Heart left ventricle (tissue), 16 donors: ENCODE measurements at regions of chr16 and their contacts with region 1.

Region 1: DNA sequence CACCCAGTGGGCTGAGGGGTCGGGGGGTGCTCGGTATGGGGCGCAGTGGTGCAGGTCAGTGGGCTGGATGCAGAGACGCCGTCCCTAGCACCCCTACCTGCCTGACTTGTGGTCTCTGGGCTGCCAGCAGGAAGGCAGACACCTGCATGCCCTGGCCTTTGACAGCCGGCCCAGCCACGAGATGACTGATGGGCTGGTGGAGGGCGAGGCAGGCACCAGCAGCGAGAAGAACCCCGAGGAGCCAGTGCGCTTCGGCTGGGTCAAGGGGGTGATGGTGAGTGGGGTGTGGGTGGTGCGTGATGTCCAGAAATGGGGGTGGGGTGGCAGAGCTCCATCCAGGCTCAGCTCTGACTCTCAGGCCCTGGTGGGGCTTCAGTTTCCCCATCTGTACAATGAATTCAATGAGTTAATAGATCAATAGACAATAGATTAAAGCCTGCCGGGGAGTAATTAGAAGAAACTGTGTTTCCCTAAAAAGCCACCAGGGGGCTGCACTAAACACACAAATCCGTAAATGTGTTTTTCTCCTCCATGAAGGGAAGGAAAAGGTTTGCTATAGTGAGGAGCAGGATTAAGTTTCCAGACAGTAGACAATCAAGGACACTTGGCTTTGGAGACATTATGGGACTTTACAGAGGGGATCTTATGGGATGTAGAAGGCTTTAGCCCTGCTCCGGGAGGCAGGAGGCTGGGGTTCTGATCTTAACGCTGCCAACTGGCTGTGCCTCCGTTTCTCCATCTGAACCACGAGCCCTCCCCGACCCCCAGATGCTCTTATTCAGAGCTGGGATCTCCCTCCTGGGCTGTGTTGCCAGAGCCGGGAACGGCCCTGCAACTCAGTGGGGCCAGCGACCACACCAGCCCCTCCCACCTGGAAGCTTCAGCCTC is 2.2 kb downstream of the SLC12A3 start:
- DNase-seq: no peak
- ATAC-seq: peak in 2 of 4 donors; percentile 9 to 19
- H3K4me3 ChIP-seq: no peak overlapping the region
- H3K27ac ChIP-seq: no peak overlapping the region
- H3K4me1 ChIP-seq: peaks cover 0 to 23% (median 5%) of the 10 kb centered on the region in 12 donors
- H3K27me3 ChIP-seq: no peaks in the 10 kb centered on the region
- CTCF ChIP-seq: peak; percentile 72 to 87 (median 80)
- POLR2A ChIP-seq: no peak

Region 2: GRCh38 chr16:56911771-56912571 is 44.8 kb after region 1 on chr16:
- intact Hi-C with region 1: loop called in 2 of 10 experiments (anchors 5 kb)
- DNase-seq: peak in 4 of 5 donors; percentile 46 to 70 (median 56)
- ATAC-seq: peak; percentile 53 to 84 (median 70)
- H3K4me3 ChIP-seq: no peak overlapping the region
- H3K27ac ChIP-seq: peak overlapping the region in 11 of 12 donors; percentile 25 to 85 (median 55)
- H3K4me1 ChIP-seq: peaks cover 0 to 67% (median 32%) of the 10 kb centered on the region in 12 donors
- H3K27me3 ChIP-seq: no peaks in the 10 kb centered on the region
- CTCF ChIP-seq: no peak
- POLR2A ChIP-seq: no peak

Region 3: DNA sequence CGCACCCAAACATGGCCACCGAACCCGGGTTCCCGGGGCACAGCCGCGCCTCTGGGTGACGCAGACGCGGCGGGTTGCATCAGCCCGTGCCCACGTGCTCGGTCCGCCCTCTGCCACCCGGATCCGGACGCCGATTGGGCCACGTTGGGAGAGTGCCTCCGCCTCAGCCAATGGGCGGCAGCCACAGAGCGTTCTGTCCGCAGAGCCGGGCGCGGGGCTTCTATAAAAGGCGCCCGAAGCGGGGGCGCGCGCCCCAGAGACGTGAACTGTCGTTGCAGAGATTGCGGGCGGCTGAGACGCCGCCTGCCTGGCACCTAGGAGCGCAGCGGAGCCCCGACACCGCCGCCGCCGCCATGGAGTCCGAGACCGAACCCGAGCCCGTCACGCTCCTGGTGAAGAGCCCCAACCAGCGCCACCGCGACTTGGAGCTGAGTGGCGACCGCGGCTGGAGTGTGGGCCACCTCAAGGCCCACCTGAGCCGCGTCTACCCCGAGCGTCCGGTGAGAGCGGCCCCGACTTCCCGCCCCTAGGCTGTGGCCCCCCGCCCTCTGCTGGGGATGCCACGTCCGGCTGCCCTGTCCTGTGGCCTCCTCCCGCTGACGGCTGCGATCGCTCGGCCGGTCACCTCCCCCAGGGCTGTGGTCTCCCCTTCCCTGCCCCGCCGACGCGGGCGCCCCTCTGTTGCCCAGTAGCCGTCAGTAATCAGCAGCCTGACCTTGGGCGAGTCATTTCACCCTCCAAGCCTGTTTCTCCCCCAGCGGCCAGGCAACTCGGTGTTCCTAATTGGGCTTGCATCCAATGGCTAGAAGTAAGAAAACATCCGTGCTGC is 64.9 kb after region 1 on chr16 and contains the start of gene HERPUD1:
- intact Hi-C with region 1: loop called in 8 of 10 experiments (anchors 5 to 10 kb)
- DNase-seq: peak; percentile 99 to 100 (median 99)
- ATAC-seq: peak; percentile 95 to 97 (median 96)
- H3K4me3 ChIP-seq: peak within 1 kb of the TSS; percentile 64 to 100 (median 94)
- H3K27ac ChIP-seq: peak within 1 kb of the TSS; percentile 96 to 100 (median 99)
- H3K4me1 ChIP-seq: peaks cover 0 to 49% (median 39%) of the 10 kb centered on the region in 12 donors
- H3K27me3 ChIP-seq: no peaks in the 10 kb centered on the region
- CTCF ChIP-seq: peak in 6 of 12 donors; percentile 4 to 24 (median 10)
- POLR2A ChIP-seq: peak; percentile 84 to 94
- total RNA-seq, gene HERPUD1: 86.9 to 197 (median 117) TPM

Region 4: DNA sequence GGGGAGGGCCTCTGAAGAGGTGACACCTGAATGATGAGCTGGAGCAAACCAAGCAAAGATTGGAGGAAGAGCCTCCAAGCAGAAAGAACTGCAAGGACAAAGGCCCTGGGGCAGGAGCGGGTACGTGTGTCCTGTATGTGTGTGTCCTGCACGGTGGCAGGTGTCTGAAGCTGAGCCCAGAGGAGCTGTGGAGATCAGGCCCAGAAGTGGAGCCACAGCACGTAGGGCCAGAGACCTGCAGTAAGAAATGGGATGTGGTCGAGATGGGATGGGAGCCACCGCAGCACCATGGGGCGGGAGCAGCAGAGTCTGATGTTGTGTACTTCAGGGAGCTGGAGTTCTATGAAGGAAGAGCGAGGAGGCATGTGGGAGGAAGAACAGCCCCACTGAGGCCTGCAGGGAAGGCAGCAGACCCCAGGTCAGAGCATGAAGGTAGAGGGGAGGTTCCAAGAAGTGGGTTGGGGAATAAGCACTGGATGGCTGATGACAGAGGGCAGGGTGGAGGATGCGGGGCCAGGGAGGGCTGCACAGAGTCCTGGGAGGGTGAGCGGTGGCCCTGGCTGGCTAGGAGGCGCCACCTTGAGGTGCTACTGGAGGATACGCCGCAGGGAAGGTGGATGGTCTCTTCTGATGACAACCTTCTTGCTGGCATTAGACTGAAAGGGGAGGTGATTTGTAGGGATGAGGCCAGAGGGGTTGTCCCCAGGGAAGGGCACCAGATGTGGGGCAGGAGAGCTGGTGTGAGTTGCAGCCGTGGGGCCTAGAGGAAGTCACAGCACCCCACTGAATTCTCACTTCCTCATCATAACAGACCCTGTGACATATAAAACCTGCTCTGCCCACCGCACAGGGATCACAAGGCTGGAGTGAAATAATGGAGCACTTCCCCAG is 83.9 kb after region 1 on chr16:
- intact Hi-C with region 1: loop called (anchors 1 to 5 kb)
- DNase-seq: peak in 3 of 5 donors; percentile 38 to 74 (median 46)
- ATAC-seq: peak; percentile 72 to 79 (median 78)
- H3K4me3 ChIP-seq: no peak overlapping the region
- H3K27ac ChIP-seq: no peak overlapping the region
- H3K4me1 ChIP-seq: peaks cover 0 to 9% (median 0%) of the 10 kb centered on the region in 12 donors
- H3K27me3 ChIP-seq: no peaks in the 10 kb centered on the region
- CTCF ChIP-seq: peak; percentile 41 to 67 (median 48)
- POLR2A ChIP-seq: no peak

Region 5: GRCh38 chr16:57045694-57046381 is 178.7 kb after region 1 on chr16:
- intact Hi-C with region 1: loop called (anchors 1 to 10 kb)
- DNase-seq: peak; percentile 63 to 84 (median 67)
- ATAC-seq: peak; percentile 50 to 86 (median 78)
- H3K4me3 ChIP-seq: peak overlapping the region in 4 of 12 donors; percentile 9 to 29 (median 24)
- H3K27ac ChIP-seq: no peak overlapping the region
- H3K4me1 ChIP-seq: peaks cover 0 to 23% (median 6%) of the 10 kb centered on the region in 12 donors
- H3K27me3 ChIP-seq: no peaks in the 10 kb centered on the region
- CTCF ChIP-seq: peak; percentile 34 to 79 (median 62)
- POLR2A ChIP-seq: no peak

Region 6: DNA sequence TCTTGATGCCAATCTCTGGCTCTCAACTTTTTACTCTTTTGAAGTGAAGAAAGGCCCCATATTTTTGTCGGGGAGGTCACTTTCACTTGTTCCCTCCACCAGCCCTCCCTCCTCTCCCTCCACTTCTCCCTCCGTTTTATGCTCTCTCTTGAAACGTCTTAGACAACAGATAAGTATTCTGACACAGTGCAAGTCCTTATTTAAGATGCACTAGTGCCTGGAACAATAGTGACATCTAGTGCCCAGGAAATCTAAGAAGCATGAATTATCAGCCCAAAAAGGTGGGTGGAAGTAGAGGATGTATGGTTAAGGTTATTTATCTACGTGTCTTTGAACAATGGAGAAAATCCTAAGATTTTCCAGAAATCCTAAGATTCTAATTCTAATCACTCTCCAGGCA is 300.8 kb after region 1 on chr16:
- intact Hi-C with region 1: loop called in 5 of 10 experiments (anchors 5 to 10 kb)
- DNase-seq: no peak
- ATAC-seq: peak; percentile 61 to 84 (median 80)
- H3K4me3 ChIP-seq: no peak overlapping the region
- H3K27ac ChIP-seq: peak overlapping the region in 1 of 12 donors; percentile 82
- H3K4me1 ChIP-seq: peaks cover 0 to 23% (median 12%) of the 10 kb centered on the region in 12 donors
- H3K27me3 ChIP-seq: no peaks in the 10 kb centered on the region
- CTCF ChIP-seq: peak; percentile 41 to 76 (median 64)
- POLR2A ChIP-seq: no peak

Region 7: DNA sequence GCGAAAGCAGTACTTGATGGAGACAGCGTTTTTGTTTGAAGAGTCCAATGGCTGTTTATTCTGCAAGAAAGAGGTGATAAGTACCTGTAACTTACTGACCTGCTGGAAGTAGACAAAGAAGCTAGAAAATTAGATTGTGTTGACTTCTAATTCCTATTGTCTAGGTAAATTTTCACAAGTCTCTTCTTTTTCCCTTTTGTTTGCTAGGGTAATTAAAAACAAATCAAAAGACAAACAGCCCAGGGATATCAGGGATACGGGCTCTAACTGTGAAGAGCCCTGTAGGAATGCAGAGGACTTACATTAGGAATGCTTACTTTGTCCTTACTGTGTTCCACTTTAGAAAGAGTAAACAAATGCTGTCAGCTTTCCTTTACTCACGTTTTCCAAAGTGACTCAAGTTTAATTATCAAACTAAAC is 311.6 kb after region 1 on chr16:
- intact Hi-C with region 1: loop called in 1 of 10 experiments (anchors 10 kb)
- DNase-seq: no peak
- ATAC-seq: no peak
- H3K4me3 ChIP-seq: no peak overlapping the region
- H3K27ac ChIP-seq: no peak overlapping the region
- H3K4me1 ChIP-seq: peaks cover 0 to 18% (median 6%) of the 10 kb centered on the region in 12 donors
- H3K27me3 ChIP-seq: no peaks in the 10 kb centered on the region
- CTCF ChIP-seq: no peak
- POLR2A ChIP-seq: no peak